ENCODE measurements at regions of chr9 and their contacts with region 1.

Region 1: GRCh38 chr9:3436629-3437420 is 89.0 kb downstream of the RFX3 start:
- DNase-seq: no peak
- ATAC-seq: no peak

Region 2: GRCh38 chr9:3240656-3241268 is 196.1 kb before region 1 on chr9:
- intact Hi-C with region 1: loop called (anchors 10 kb)
- DNase-seq: peak; percentile 78
- ATAC-seq: peak; percentile 88

Region 3: DNA sequence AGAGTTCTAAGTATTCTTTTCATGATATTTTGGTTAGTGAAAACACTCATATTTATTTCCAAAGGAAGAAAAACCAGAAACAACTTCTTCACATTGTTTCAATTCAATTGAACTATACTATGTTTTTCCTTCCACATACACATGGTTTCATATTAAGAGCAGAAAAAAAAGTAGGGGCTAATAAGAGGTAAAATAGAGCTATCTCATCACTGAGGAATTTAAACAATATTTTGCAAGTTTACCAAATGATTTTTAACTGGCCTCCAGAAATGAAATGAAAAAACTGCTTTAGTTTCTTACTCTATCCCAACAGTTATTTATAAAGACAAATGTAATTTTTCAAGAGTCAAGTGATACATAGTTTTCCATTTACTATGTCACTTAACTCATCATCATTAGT is 144.5 kb before region 1 on chr9:
- intact Hi-C with region 1: no loop called
- DNase-seq: no peak
- ATAC-seq: no peak

Region 4: DNA sequence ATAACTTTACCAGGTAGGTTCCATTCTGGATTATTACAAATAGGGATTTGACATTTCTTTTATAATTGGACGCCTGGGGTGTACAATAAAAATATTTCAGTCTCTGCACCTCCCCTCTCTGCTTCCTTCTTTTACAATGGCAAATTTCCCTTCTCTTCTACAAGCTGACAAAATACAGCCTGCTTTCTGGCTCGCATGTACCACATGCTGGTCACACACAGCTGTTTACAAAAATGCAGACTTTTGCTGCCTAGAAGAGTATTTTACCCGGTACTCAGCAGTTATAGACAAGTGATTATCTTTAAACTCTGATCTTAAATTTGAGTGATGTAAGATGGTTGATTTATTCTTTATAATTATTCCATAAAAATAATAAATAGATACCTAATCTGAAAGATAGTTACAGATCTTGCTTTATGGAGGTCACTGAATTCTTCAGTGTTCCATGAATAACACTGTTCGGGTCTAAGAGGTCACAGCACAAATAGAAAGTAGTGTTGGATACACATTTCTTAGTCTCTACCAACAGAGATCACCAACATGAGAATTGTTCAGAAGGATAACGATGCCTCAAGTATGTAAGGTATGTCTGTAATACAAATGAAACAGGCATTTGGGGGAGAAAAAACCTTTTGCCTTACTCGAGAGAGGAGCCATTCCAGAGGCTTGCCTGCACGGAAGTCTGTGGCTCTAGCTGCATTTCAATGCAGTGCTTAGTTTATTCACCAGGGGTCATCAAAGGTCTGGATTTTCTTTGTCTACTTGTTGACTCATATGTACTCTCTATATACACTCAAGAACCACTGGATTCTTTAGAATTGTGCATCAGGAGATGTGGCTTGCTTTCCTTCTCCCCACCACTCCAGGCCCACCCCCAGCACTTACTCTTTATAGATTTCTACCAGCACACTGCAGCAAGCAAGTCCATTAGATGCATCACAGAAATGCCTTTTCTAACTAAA is 295.5 kb after region 1 on chr9:
- intact Hi-C with region 1: no loop called
- DNase-seq: no peak
- ATAC-seq: peak; percentile 98